PC-3 (cell line): ENCODE measurements at regions of chr11 and their contacts with region 1.

Region 1: GRCh38 chr11:65180877-65181568 is 705 bp upstream of the CAPN1 start:
- DNase-seq: peak; percentile 72
- ATAC-seq: peak; percentile 57
- H3K4me3 ChIP-seq: peak overlapping the region; percentile 92
- H3K27ac ChIP-seq: peak overlapping the region; percentile 47
- H3K4me1 ChIP-seq: peaks cover 27% of the 10 kb centered on the region
- H3K27me3 ChIP-seq: no peaks in the 10 kb centered on the region
- CTCF ChIP-seq: peak; percentile 82

Region 2: GRCh38 chr11:65095974-65096806 is 84.8 kb before region 1 on chr11 and contains the start of gene VPS51:
- CTCF ChIA-PET with region 1: no interaction called
- POLR2A ChIA-PET with region 1: no interaction called
- intact Hi-C with region 1: no loop called
- DNase-seq: peak; percentile 92
- ATAC-seq: peak; percentile 98
- H3K4me3 ChIP-seq: peak within 1 kb of the TSS; percentile 84
- H3K27ac ChIP-seq: peak within 1 kb of the TSS; percentile 63
- H3K4me1 ChIP-seq: peaks cover 13% of the 10 kb centered on the region
- H3K27me3 ChIP-seq: no peaks in the 10 kb centered on the region
- CTCF ChIP-seq: no peak
- total RNA-seq, gene VPS51: 414 and 743 TPM in 2 replicates

Region 3: GRCh38 chr11:65134386-65135253 is 46.4 kb before region 1 on chr11 and contains the start of gene SYVN1:
- CTCF ChIA-PET with region 1: interaction called, 4 read pairs
- POLR2A ChIA-PET with region 1: interaction called, 12 read pairs
- intact Hi-C with region 1: loop called (anchors 1 kb)
- DNase-seq: peak; percentile 99
- ATAC-seq: peak; percentile 91
- H3K4me3 ChIP-seq: peak within 1 kb of the TSS; percentile 90
- H3K27ac ChIP-seq: peak within 1 kb of the TSS; percentile 95
- H3K4me1 ChIP-seq: peaks cover 16% of the 10 kb centered on the region
- H3K27me3 ChIP-seq: no peaks in the 10 kb centered on the region
- CTCF ChIP-seq: no peak
- total RNA-seq, gene SYVN1: 22.3 and 33.2 TPM in 2 replicates

Region 4: DNA sequence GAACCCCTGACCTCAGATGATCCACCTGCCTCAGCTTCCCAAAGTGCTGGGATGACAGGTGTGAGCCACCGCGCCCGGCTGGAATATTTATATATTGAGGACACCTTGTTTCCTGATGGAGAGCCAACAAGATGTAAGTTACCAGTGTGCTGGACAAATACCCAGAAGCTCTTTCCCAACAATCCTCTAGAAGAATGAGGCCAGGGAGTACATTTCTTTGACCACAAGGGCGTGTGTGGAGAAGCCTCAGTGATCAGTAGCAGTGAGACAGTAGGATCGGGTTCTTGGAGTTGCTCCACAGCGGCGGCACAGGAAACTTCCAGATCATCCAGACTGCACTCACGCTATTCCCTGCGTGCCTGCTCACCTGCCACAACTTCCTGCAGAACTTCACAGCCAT is 70.5 kb after region 1 on chr11:
- CTCF ChIA-PET with region 1: interaction called, 3 read pairs
- POLR2A ChIA-PET with region 1: no interaction called
- intact Hi-C with region 1: loop called (anchors 2 kb)
- DNase-seq: peak; percentile 19
- ATAC-seq: no peak
- H3K4me3 ChIP-seq: no peak overlapping the region
- H3K27ac ChIP-seq: no peak overlapping the region
- H3K4me1 ChIP-seq: no peaks in the 10 kb centered on the region; the same call in 1 of the 2 replicates
- H3K27me3 ChIP-seq: no peaks in the 10 kb centered on the region
- CTCF ChIP-seq: no peak

Region 5: GRCh38 chr11:65314501-65315203 is 133.6 kb after region 1 on chr11 and contains the start of gene CDC42EP2:
- CTCF ChIA-PET with region 1: no interaction called
- POLR2A ChIA-PET with region 1: no interaction called
- intact Hi-C with region 1: loop called (anchors 10 kb)
- DNase-seq: peak; percentile 94
- ATAC-seq: peak; percentile 67
- H3K4me3 ChIP-seq: peak within 1 kb of the TSS; percentile 72
- H3K27ac ChIP-seq: peak within 1 kb of the TSS; percentile 87
- H3K4me1 ChIP-seq: peaks cover 36% of the 10 kb centered on the region
- H3K27me3 ChIP-seq: no peaks in the 10 kb centered on the region
- CTCF ChIP-seq: no peak
- total RNA-seq, gene CDC42EP2: 16.6 and 25.7 TPM in 2 replicates